H1 (cell line): ENCODE measurements at regions of chr18 and their contacts with region 1.

Region 1: DNA sequence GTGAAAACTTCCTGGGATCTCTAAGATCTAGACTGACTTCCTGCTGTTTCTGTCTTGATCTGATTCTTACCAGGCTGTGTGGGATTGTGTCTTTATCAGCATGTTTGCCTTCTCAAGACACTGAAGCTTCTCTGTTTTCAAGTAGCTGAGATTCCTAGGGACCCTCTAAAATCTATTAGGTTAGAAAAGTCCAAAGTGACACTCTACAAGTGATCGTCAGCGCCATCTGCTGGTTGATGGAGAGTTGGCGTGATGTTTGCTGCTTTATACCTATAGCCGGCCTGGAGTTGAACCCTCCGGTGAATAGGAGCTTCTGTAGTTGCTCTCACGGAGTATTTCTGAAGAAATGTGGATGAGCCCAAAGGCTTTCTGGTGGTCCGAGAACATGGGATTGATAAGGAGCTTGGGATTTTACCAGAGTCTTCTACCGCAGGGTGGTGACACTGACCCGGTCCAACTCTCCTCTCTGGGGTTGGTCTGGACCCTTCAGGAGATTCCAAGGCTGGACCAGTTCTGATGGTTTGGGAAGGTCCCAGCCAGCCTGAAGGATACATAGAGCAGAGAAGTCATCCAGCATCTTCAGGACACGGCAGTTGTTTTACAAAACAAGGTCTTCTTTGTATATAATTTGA is 96.0 kb upstream of the TTC39C start:
- DNase-seq: peak; percentile 46 to 90
- H3K4me3 ChIP-seq: no peak overlapping the region
- H3K27ac ChIP-seq: no peak overlapping the region
- H3K4me1 ChIP-seq: no peaks in the 10 kb centered on the region
- H3K27me3 ChIP-seq: no peaks in the 10 kb centered on the region
- CTCF ChIP-seq: peak; percentile 60 to 86 (median 75)
- EP300 ChIP-seq: no peak
- POLR2A ChIP-seq: no peak
- RAD21 ChIP-seq: peak; percentile 82 to 89

Region 2: DNA sequence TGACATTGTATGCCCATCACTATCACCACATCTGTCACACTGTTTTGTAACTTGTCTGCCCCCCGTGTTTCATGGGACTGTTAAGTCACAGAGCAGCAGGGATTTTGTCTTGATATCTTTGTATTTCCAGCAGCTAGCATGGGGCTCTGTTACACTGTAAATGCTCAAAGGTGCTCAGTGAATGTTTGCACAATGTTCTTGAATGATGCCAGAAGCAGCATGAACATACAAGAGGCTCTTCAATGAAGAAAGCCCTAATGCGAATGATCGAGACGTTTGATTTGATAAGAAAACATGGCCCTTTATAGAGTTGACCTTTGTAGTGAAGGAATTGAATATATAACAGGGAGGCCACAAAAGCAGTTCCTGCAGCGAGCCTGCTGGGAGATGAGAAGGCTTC is 24.9 kb before region 1 on chr18:
- CTCF ChIA-PET with region 1: interaction called, 14 read pairs
- POLR2A ChIA-PET with region 1: interaction called, 3 read pairs
- DNase-seq: no peak
- H3K4me3 ChIP-seq: no peak overlapping the region
- H3K27ac ChIP-seq: no peak overlapping the region
- H3K4me1 ChIP-seq: no peaks in the 10 kb centered on the region
- H3K27me3 ChIP-seq: no peaks in the 10 kb centered on the region
- CTCF ChIP-seq: no peak
- EP300 ChIP-seq: no peak
- POLR2A ChIP-seq: no peak
- RAD21 ChIP-seq: no peak

Region 3: DNA sequence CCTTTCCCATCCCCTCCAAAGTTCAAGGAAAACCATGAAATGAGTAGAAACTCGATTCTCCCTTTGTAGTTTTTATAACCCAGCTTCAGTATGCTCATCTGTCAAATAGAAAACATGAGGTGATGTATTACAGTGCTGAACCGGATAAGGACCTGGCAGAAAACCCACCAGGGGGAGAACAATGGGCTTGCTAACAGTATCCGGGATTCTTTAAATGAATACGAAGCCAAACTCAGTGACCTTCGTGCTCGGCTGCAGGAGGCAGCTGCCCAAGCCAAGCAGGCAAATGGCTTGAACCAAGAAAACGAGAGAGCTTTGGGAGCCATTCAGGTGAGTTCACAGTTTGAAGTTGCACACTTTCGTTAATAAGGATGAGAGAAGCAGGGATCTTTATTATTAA is 17.5 kb before region 1 on chr18:
- CTCF ChIA-PET with region 1: interaction called, 19 read pairs
- POLR2A ChIA-PET with region 1: no interaction called
- DNase-seq: no peak
- H3K4me3 ChIP-seq: no peak overlapping the region
- H3K27ac ChIP-seq: no peak overlapping the region
- H3K4me1 ChIP-seq: peaks cover 0 to 4% (median 0%) of the 10 kb centered on the region in 4 experiments; a peak in 1 of 7 replicates
- H3K27me3 ChIP-seq: no peaks in the 10 kb centered on the region
- CTCF ChIP-seq: no peak
- EP300 ChIP-seq: no peak
- POLR2A ChIP-seq: no peak
- RAD21 ChIP-seq: no peak

Region 4: GRCh38 chr18:23938043-23938756 is 19.7 kb after region 1 on chr18:
- CTCF ChIA-PET with region 1: interaction called, 13 read pairs
- POLR2A ChIA-PET with region 1: no interaction called
- DNase-seq: no peak
- H3K4me3 ChIP-seq: no peak overlapping the region
- H3K27ac ChIP-seq: no peak overlapping the region
- H3K4me1 ChIP-seq: no peaks in the 10 kb centered on the region
- H3K27me3 ChIP-seq: no peaks in the 10 kb centered on the region
- CTCF ChIP-seq: no peak
- EP300 ChIP-seq: no peak
- POLR2A ChIP-seq: no peak
- RAD21 ChIP-seq: no peak

Region 5: DNA sequence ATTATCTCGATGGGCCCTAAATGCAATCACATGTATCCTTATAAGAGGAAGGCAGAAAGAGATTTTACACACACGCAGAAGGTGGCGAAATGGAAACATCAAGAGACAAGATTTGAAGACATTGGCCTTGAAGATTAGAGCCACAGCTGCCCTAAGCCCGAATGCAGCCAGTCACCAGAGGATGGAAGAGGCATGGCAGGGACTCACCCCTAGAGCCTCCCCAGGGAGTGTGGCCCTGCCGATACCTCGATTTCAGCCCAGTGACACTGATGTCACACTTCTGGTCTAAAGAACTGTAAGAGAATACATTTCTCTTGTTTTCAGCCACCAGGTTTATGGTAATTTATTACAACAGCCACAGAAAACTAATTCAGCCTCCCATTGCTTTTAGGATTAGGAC is 113.4 kb after region 1 on chr18:
- CTCF ChIA-PET with region 1: no interaction called
- POLR2A ChIA-PET with region 1: no interaction called
- DNase-seq: no peak
- H3K4me3 ChIP-seq: no peak overlapping the region
- H3K27ac ChIP-seq: no peak overlapping the region
- H3K4me1 ChIP-seq: peaks cover 0 to 3% (median 0%) of the 10 kb centered on the region in 4 experiments; a peak in 1 of 7 replicates
- H3K27me3 ChIP-seq: no peaks in the 10 kb centered on the region
- CTCF ChIP-seq: no peak
- EP300 ChIP-seq: no peak
- POLR2A ChIP-seq: no peak
- RAD21 ChIP-seq: no peak

Region 6: GRCh38 chr18:24118750-24119577 is 200.4 kb after region 1 on chr18:
- CTCF ChIA-PET with region 1: interaction called, 11 read pairs
- POLR2A ChIA-PET with region 1: no interaction called
- DNase-seq: peak in 1 of 2 experiments; percentile 76
- H3K4me3 ChIP-seq: no peak overlapping the region
- H3K27ac ChIP-seq: no peak overlapping the region
- H3K4me1 ChIP-seq: no peaks in the 10 kb centered on the region
- H3K27me3 ChIP-seq: no peaks in the 10 kb centered on the region
- CTCF ChIP-seq: peak in 2 of 3 experiments; percentile 59 to 75; a peak in 3 of 4 replicates
- EP300 ChIP-seq: no peak
- POLR2A ChIP-seq: no peak
- RAD21 ChIP-seq: peak; percentile 85 to 87